ENCODE measurements at regions of chr1 and their contacts with region 1.

Region 1: GRCh38 chr1:233440951-233441401 is 113.5 kb downstream of the MAP3K21 start:
- DNase-seq: peak; percentile 54
- ATAC-seq: peak; percentile 85
- H3K4me3 ChIP-seq: no peak overlapping the region
- H3K27ac ChIP-seq: no peak overlapping the region
- H3K4me1 ChIP-seq: no peaks in the 10 kb centered on the region
- H3K27me3 ChIP-seq: no peaks in the 10 kb centered on the region
- CTCF ChIP-seq: peak; percentile 60 to 86 (median 66)
- EP300 ChIP-seq: no peak
- POLR2A ChIP-seq: no peak
- RAD21 ChIP-seq: peak; percentile 98

Region 2: DNA sequence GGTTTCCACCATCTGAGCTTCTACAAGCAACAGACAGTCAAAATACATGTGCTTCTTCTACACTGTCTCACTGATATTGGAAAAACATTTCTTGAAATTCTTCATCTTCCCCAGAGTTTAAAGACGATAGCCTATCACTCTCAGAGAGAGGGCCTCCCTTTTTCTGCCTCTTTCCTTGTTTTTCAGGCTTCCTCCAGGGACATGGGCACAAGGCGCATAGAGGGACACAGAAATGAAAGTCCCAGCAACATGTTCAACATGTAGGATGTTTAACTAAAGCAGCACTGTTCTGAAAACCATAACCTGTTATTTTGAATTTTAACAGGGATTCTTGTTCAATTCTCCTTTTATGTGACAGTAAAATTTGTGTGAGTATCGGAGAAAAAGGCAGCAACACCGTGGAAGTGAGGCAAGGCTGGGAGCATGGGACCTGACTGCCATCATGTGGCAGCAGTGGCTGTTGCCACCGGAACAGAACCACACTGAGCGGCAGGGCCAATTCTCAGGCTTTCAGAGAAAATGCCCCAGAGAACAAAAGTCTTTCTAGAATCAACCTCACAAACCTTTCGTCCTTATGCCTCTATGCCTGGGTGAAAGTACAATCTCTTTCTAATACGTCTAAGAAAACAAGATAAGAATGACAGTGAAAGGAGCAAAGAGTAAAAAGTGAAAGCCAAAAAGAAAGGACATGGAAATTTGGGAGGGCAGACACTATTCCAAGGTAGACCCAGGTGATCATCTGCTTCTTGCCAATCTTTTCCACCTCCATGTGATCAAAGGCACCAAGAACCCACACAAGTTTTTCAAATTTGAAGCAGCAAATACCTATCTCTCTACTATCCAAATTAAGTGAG is 199.9 kb before region 1 on chr1:
- CTCF ChIA-PET with region 1: no interaction called
- POLR2A ChIA-PET with region 1: no interaction called
- RAD21 ChIA-PET with region 1: no interaction called
- SMC1A ChIA-PET with region 1: no interaction called
- in situ Hi-C with region 1: no loop called
- intact Hi-C with region 1: no loop called
- DNase-seq: no peak
- ATAC-seq: peak; percentile 96
- H3K4me3 ChIP-seq: no peak overlapping the region
- H3K27ac ChIP-seq: no peak overlapping the region
- H3K4me1 ChIP-seq: no peaks in the 10 kb centered on the region
- H3K27me3 ChIP-seq: no peaks in the 10 kb centered on the region
- CTCF ChIP-seq: peak; percentile 64 to 90 (median 74); a peak in 4 of 6 replicates
- EP300 ChIP-seq: no peak
- POLR2A ChIP-seq: no peak
- RAD21 ChIP-seq: peak; percentile 76

Region 3: GRCh38 chr1:233341117-233341516 is 99.9 kb before region 1 on chr1:
- CTCF ChIA-PET with region 1: no interaction called
- POLR2A ChIA-PET with region 1: no interaction called
- RAD21 ChIA-PET with region 1: no interaction called
- SMC1A ChIA-PET with region 1: no interaction called
- in situ Hi-C with region 1: no loop called
- intact Hi-C with region 1: no loop called
- DNase-seq: no peak
- ATAC-seq: no peak
- H3K4me3 ChIP-seq: no peak overlapping the region
- H3K27ac ChIP-seq: no peak overlapping the region
- H3K4me1 ChIP-seq: no peaks in the 10 kb centered on the region
- H3K27me3 ChIP-seq: no peaks in the 10 kb centered on the region
- CTCF ChIP-seq: no peak
- EP300 ChIP-seq: no peak
- POLR2A ChIP-seq: no peak
- RAD21 ChIP-seq: no peak

Region 4: GRCh38 chr1:233452724-233453123 is 11.7 kb after region 1 on chr1:
- CTCF ChIA-PET with region 1: interaction called, 7 read pairs
- POLR2A ChIA-PET with region 1: interaction called, 5 read pairs
- RAD21 ChIA-PET with region 1: interaction called, 28 read pairs
- SMC1A ChIA-PET with region 1: interaction called, 35 read pairs
- in situ Hi-C with region 1: no loop called
- intact Hi-C with region 1: no loop called
- DNase-seq: no peak
- ATAC-seq: no peak
- H3K4me3 ChIP-seq: no peak overlapping the region
- H3K27ac ChIP-seq: no peak overlapping the region
- H3K4me1 ChIP-seq: no peaks in the 10 kb centered on the region
- H3K27me3 ChIP-seq: no peaks in the 10 kb centered on the region
- CTCF ChIP-seq: no peak
- EP300 ChIP-seq: no peak
- POLR2A ChIP-seq: no peak
- RAD21 ChIP-seq: no peak

Region 5: GRCh38 chr1:233482388-233482787 is 41.4 kb after region 1 on chr1:
- CTCF ChIA-PET with region 1: interaction called, 26 read pairs
- POLR2A ChIA-PET with region 1: no interaction called
- RAD21 ChIA-PET with region 1: interaction called, 13 read pairs
- SMC1A ChIA-PET with region 1: interaction called, 12 read pairs
- in situ Hi-C with region 1: no loop called
- intact Hi-C with region 1: no loop called
- DNase-seq: no peak
- ATAC-seq: no peak
- H3K4me3 ChIP-seq: no peak overlapping the region
- H3K27ac ChIP-seq: no peak overlapping the region
- H3K4me1 ChIP-seq: peaks cover 3% of the 10 kb centered on the region; the same call in 1 of the 2 replicates
- H3K27me3 ChIP-seq: no peaks in the 10 kb centered on the region
- CTCF ChIP-seq: no peak
- EP300 ChIP-seq: no peak
- POLR2A ChIP-seq: no peak
- RAD21 ChIP-seq: no peak

Region 6: GRCh38 chr1:233549917-233550316 is 108.9 kb after region 1 on chr1:
- CTCF ChIA-PET with region 1: interaction called, 3 read pairs
- POLR2A ChIA-PET with region 1: interaction called, 3 read pairs
- RAD21 ChIA-PET with region 1: interaction called, 14 read pairs
- SMC1A ChIA-PET with region 1: interaction called, 20 read pairs
- in situ Hi-C with region 1: no loop called
- intact Hi-C with region 1: no loop called
- DNase-seq: no peak
- ATAC-seq: peak; percentile 85
- H3K4me3 ChIP-seq: no peak overlapping the region
- H3K27ac ChIP-seq: no peak overlapping the region
- H3K4me1 ChIP-seq: peaks cover 10% of the 10 kb centered on the region
- H3K27me3 ChIP-seq: no peaks in the 10 kb centered on the region
- CTCF ChIP-seq: no peak
- EP300 ChIP-seq: no peak
- POLR2A ChIP-seq: no peak
- RAD21 ChIP-seq: no peak

Region 7: GRCh38 chr1:233620065-233620464 is 179.1 kb after region 1 on chr1:
- CTCF ChIA-PET with region 1: interaction called, 4 read pairs
- POLR2A ChIA-PET with region 1: interaction called, 3 read pairs
- RAD21 ChIA-PET with region 1: interaction called, 9 read pairs
- SMC1A ChIA-PET with region 1: interaction called, 7 read pairs
- in situ Hi-C with region 1: no loop called
- intact Hi-C with region 1: loop called (anchors 2 kb)
- DNase-seq: peak; percentile 49
- ATAC-seq: peak; percentile 59
- H3K4me3 ChIP-seq: no peak overlapping the region
- H3K27ac ChIP-seq: no peak overlapping the region
- H3K4me1 ChIP-seq: peaks cover 23% of the 10 kb centered on the region
- H3K27me3 ChIP-seq: no peaks in the 10 kb centered on the region
- CTCF ChIP-seq: no peak
- EP300 ChIP-seq: peak; percentile 58 to 86; a peak in 3 of 4 replicates
- POLR2A ChIP-seq: no peak
- RAD21 ChIP-seq: no peak

Region 8: GRCh38 chr1:233790662-233791375 is 349.8 kb after region 1 on chr1:
- CTCF ChIA-PET with region 1: interaction called, 143 read pairs
- POLR2A ChIA-PET with region 1: no interaction called
- RAD21 ChIA-PET with region 1: interaction called, 81 read pairs
- SMC1A ChIA-PET with region 1: interaction called, 107 read pairs
- in situ Hi-C with region 1: loop called (anchors 5 kb)
- intact Hi-C with region 1: loop called (anchors 1 kb)
- DNase-seq: peak; percentile 30
- ATAC-seq: peak; percentile 98
- H3K4me3 ChIP-seq: no peak overlapping the region
- H3K27ac ChIP-seq: no peak overlapping the region
- H3K4me1 ChIP-seq: no peaks in the 10 kb centered on the region
- H3K27me3 ChIP-seq: no peaks in the 10 kb centered on the region
- CTCF ChIP-seq: peak; percentile 94 to 97 (median 94); a peak in 5 of 6 replicates
- EP300 ChIP-seq: no peak
- POLR2A ChIP-seq: no peak
- RAD21 ChIP-seq: peak; percentile 97